AG04449 (cell line): ENCODE measurements at regions of chr9 and their contacts with region 1.

Region 1: GRCh38 chr9:97900738-97901565 is 21.3 kb downstream of the TRMO start:
- DNase-seq: no peak
- H3K4me3 ChIP-seq: no peak overlapping the region
- CTCF ChIP-seq: peak; percentile 55

Region 2: GRCh38 chr9:97689401-97689800 is 211.6 kb before region 1 on chr9:
- CTCF ChIA-PET with region 1: interaction called, 12 read pairs
- POLR2A ChIA-PET with region 1: no interaction called
- DNase-seq: no peak
- H3K4me3 ChIP-seq: no peak overlapping the region
- CTCF ChIP-seq: no peak

Region 3: GRCh38 chr9:97696803-97697601 is 203.9 kb before region 1 on chr9 and contains the start of gene XPA:
- CTCF ChIA-PET with region 1: interaction called, 62 read pairs
- POLR2A ChIA-PET with region 1: no interaction called
- DNase-seq: peak; percentile 36
- H3K4me3 ChIP-seq: peak within 1 kb of the TSS; percentile 75
- CTCF ChIP-seq: no peak

Region 4: GRCh38 chr9:97703437-97704344 is 197.3 kb before region 1 on chr9:
- CTCF ChIA-PET with region 1: interaction called, 62 read pairs
- POLR2A ChIA-PET with region 1: no interaction called
- DNase-seq: peak; percentile 45
- H3K4me3 ChIP-seq: no peak overlapping the region
- CTCF ChIP-seq: no peak

Region 5: GRCh38 chr9:97710356-97711222 is 190.4 kb before region 1 on chr9:
- CTCF ChIA-PET with region 1: interaction called, 119 read pairs
- POLR2A ChIA-PET with region 1: no interaction called
- DNase-seq: no peak
- H3K4me3 ChIP-seq: no peak overlapping the region
- CTCF ChIP-seq: peak; percentile 70

Region 6: DNA sequence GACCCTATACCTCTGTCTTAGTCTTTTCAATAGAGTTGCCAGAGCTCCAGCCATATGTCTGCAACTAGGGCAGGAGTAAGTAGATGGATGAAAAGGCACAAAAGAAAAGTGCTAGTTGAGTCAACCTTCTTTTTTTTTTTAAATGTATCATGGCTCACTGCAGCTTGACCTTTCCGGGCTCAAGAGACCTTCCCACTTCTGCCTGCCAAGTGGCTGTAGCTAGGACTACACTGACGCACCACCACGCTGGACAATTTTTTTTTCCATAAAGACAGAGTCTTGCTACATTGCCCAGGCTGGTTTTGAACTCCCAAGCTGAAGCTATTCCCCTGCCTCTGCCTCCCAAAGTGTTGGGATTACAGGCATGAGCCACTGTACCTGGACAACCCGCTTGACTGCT is 20.6 kb before region 1 on chr9:
- CTCF ChIA-PET with region 1: interaction called, 147 read pairs
- POLR2A ChIA-PET with region 1: no interaction called
- DNase-seq: no peak
- H3K4me3 ChIP-seq: no peak overlapping the region
- CTCF ChIP-seq: no peak

Region 7: GRCh38 chr9:97890038-97890437 is 10.9 kb before region 1 on chr9:
- CTCF ChIA-PET with region 1: interaction called, 147 read pairs
- POLR2A ChIA-PET with region 1: no interaction called
- DNase-seq: no peak
- H3K4me3 ChIP-seq: no peak overlapping the region
- CTCF ChIP-seq: peak; percentile 32

Region 8: GRCh38 chr9:98064623-98065392 is 163.9 kb after region 1 on chr9:
- CTCF ChIA-PET with region 1: no interaction called
- POLR2A ChIA-PET with region 1: no interaction called
- DNase-seq: no peak
- H3K4me3 ChIP-seq: no peak overlapping the region
- CTCF ChIP-seq: no peak